ENCODE measurements at regions of chr3 and their contacts with region 1.

Region 1: GRCh38 chr3:150546226-150547044 is at the starts of genes EIF2A and SERP1:
- DNase-seq: peak; percentile 99
- H3K4me3 Mint-ChIP-seq: peak within 1 kb of the TSS; percentile 95
- H3K27ac Mint-ChIP-seq: peak within 1 kb of the TSS; percentile 98
- H3K4me1 Mint-ChIP-seq: peaks cover 70% of the 10 kb centered on the region
- H3K27me3 Mint-ChIP-seq: no peaks in the 10 kb centered on the region
- total RNA-seq, gene EIF2A: 122 TPM in 2 replicates
- total RNA-seq, gene SERP1: 96.0 and 102 TPM in 2 replicates

Region 2: GRCh38 chr3:149812606-149813366 is 733.6 kb before region 1 on chr3 and contains the start of gene RNF13:
- intact Hi-C with region 1: loop called (anchors 2 kb)
- DNase-seq: peak; percentile 90
- H3K4me3 Mint-ChIP-seq: peak within 1 kb of the TSS; percentile 92
- H3K27ac Mint-ChIP-seq: peak within 1 kb of the TSS; percentile 100
- H3K4me1 Mint-ChIP-seq: peaks cover 56% of the 10 kb centered on the region
- H3K27me3 Mint-ChIP-seq: peaks cover 10% of the 10 kb centered on the region
- total RNA-seq, gene RNF13: 41.1 and 41.6 TPM in 2 replicates

Region 3: DNA sequence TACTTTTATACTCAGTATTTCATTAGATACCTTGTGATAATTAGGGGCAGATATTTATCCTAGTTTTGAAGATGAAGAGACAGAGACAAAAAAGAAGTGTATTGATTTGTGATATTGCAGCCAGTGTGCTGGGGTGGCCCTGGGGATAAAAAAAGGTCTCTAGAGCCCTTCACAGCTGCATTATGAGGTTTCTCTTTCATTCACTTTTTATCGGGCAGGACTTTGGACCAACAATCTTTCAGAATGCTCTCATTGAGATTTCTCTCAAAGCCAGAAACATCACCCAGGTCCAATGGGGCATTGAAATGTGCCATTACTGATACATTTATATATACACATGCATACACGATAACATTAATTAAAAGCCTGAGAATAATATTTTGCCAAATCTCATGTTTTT is 36.2 kb after region 1 on chr3:
- intact Hi-C with region 1: loop called (anchors 1 kb)
- DNase-seq: no peak
- H3K4me3 Mint-ChIP-seq: no peak overlapping the region
- H3K27ac Mint-ChIP-seq: peak overlapping the region; percentile 74
- H3K4me1 Mint-ChIP-seq: peaks cover 14% of the 10 kb centered on the region
- H3K27me3 Mint-ChIP-seq: no peaks in the 10 kb centered on the region

Region 4: DNA sequence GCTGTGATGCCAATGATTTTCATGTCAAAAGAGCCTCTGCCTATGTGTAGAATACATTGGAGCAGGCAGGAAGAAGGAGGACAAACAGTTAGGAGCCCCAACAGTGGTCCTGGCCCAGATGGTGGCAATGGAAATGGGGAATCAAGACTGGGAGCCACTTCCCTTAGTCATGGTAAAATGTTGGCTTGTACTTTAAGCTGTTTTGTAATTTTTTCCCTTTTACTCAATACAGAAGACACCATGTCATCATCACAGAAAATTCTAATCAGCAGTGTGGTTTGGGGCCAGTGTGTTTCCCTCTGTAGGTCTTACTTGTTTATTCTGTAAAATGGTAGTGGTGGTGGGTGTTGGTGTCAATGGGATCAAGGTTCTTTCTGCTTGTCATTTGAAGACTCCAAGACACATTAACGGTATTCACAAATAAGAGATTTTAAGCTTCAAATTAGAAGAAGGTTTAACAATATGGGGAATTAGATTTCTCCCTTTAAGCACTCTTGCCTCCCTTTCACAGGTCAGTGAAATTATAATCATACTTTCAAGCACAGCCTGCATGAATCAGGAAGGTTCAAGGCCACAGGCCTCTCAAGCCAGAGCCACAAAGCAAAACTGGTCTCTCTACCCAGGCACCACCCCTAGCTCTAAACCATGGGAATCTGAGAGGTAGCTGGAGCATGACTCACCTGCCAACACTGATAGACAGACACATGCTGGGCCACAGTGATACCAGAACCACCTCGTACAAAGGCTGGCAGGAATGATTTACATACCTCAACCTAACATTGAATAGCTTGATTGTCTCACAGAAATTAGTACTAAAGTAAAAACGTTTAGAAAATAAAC is 191.7 kb after region 1 on chr3:
- intact Hi-C with region 1: loop called (anchors 1 kb)
- DNase-seq: no peak
- H3K4me3 Mint-ChIP-seq: peak overlapping the region; percentile 42
- H3K27ac Mint-ChIP-seq: peak overlapping the region; percentile 92
- H3K4me1 Mint-ChIP-seq: peaks cover 93% of the 10 kb centered on the region
- H3K27me3 Mint-ChIP-seq: no peaks in the 10 kb centered on the region

Region 5: GRCh38 chr3:151086484-151087456 is 540.3 kb after region 1 on chr3:
- intact Hi-C with region 1: loop called (anchors 1 kb)
- DNase-seq: peak; percentile 58
- H3K4me3 Mint-ChIP-seq: peak overlapping the region; percentile 85
- H3K27ac Mint-ChIP-seq: peak overlapping the region; percentile 27
- H3K4me1 Mint-ChIP-seq: peaks cover 4% of the 10 kb centered on the region
- H3K27me3 Mint-ChIP-seq: peaks cover 48% of the 10 kb centered on the region

Region 6: DNA sequence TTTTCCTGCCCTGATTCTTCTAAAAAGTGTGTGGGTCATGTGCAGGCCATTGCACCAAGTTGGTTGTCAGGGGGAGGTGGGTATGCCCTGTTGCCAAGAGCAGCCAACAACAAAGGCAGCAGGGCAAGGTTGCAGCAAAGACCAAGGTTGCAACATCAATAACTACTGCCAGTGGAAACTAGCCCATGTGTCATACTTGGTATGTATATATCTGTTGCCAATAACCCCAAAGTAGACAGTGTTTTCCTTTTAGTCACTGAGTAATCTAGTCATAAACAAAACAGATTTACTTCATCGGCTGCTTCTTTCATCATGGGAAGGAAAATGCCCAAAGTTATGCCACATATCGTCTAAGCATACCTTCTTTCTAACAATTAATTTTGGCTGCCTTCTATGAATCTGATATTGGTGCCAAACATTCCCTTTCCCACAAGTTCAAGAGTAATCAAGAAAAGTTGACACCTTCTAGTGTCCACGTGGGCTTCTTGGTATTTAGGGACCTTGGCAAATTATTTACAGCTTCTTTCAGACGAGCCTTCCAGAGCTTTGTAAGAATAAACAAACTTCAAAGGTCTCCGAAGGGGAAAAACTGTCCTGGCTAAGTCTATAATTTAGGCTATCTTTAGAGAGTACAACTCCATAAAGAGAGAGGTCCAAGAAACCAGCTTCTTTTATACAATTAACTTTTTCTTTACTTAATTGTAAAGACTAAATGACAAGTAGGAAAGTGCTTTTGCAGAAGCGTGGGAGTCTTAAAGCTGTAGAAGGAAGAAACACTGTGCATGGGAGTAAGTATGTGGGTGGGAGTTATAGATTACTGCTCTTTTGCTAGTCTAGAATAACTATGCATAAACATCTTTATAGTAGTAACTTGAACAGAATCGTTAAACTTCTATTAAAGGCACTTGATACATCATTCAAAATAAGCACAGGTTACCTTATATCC is 1712.3 kb after region 1 on chr3:
- intact Hi-C with region 1: loop called (anchors 5 kb)
- DNase-seq: peak; percentile 62
- H3K4me3 Mint-ChIP-seq: peak overlapping the region; percentile 81
- H3K27ac Mint-ChIP-seq: peak overlapping the region; percentile 98
- H3K4me1 Mint-ChIP-seq: peaks cover 90% of the 10 kb centered on the region
- H3K27me3 Mint-ChIP-seq: no peaks in the 10 kb centered on the region